CD4-positive, alpha-beta memory T cell (primary cell): ENCODE measurements at regions of chr5 and their contacts with region 1.

Region 1: GRCh38 chr5:82351754-82352145 is 73.6 kb upstream of the RPS23 start:
- DNase-seq: peak in 4 of 5 donors; percentile 46 to 53 (median 50)
- H3K4me3 ChIP-seq: no peak overlapping the region
- H3K4me3 Mint-ChIP-seq: no peak overlapping the region
- H3K27ac ChIP-seq: no peak overlapping the region
- H3K27ac Mint-ChIP-seq: no peak overlapping the region
- H3K4me1 ChIP-seq: peaks cover 11% of the 10 kb centered on the region
- H3K4me1 Mint-ChIP-seq: peaks cover 5 to 12% (median 8%) of the 10 kb centered on the region in 4 donors
- H3K27me3 ChIP-seq: no peaks in the 10 kb centered on the region
- H3K27me3 Mint-ChIP-seq: no peaks in the 10 kb centered on the region

Region 2: GRCh38 chr5:82234883-82235282 is 116.9 kb before region 1 on chr5:
- CTCF ChIA-PET with region 1: no interaction called
- POLR2A ChIA-PET with region 1: no interaction called
- intact Hi-C with region 1: no loop called
- DNase-seq: no peak
- H3K4me3 ChIP-seq: no peak overlapping the region
- H3K4me3 Mint-ChIP-seq: no peak overlapping the region
- H3K27ac ChIP-seq: no peak overlapping the region
- H3K27ac Mint-ChIP-seq: no peak overlapping the region
- H3K4me1 ChIP-seq: no peaks in the 10 kb centered on the region
- H3K4me1 Mint-ChIP-seq: no peaks in the 10 kb centered on the region
- H3K27me3 ChIP-seq: no peaks in the 10 kb centered on the region
- H3K27me3 Mint-ChIP-seq: no peaks in the 10 kb centered on the region

Region 3: GRCh38 chr5:82494942-82495341 is 143.2 kb after region 1 on chr5:
- CTCF ChIA-PET with region 1: interaction called, 5 read pairs
- POLR2A ChIA-PET with region 1: no interaction called
- intact Hi-C with region 1: loop called (anchors 10 kb)
- DNase-seq: no peak
- H3K4me3 ChIP-seq: no peak overlapping the region
- H3K4me3 Mint-ChIP-seq: no peak overlapping the region
- H3K27ac ChIP-seq: no peak overlapping the region
- H3K27ac Mint-ChIP-seq: no peak overlapping the region
- H3K4me1 ChIP-seq: no peaks in the 10 kb centered on the region
- H3K4me1 Mint-ChIP-seq: peaks cover 0 to 6% (median 5%) of the 10 kb centered on the region in 4 donors
- H3K27me3 ChIP-seq: no peaks in the 10 kb centered on the region
- H3K27me3 Mint-ChIP-seq: peaks cover 0 to 5% of the 10 kb centered on the region in 2 donors

Region 4: GRCh38 chr5:82793808-82794419 is 442.2 kb after region 1 on chr5:
- CTCF ChIA-PET with region 1: interaction called, 102 read pairs
- POLR2A ChIA-PET with region 1: no interaction called
- intact Hi-C with region 1: loop called (anchors 1 kb)
- DNase-seq: peak in 4 of 5 donors; percentile 16 to 28 (median 22)
- H3K4me3 ChIP-seq: no peak overlapping the region
- H3K4me3 Mint-ChIP-seq: no peak overlapping the region
- H3K27ac ChIP-seq: no peak overlapping the region
- H3K27ac Mint-ChIP-seq: peak overlapping the region in 1 of 7 donors; percentile 17
- H3K4me1 ChIP-seq: no peaks in the 10 kb centered on the region
- H3K4me1 Mint-ChIP-seq: no peaks in the 10 kb centered on the region
- H3K27me3 ChIP-seq: no peaks in the 10 kb centered on the region
- H3K27me3 Mint-ChIP-seq: peaks cover 2 to 4% of the 10 kb centered on the region in 2 donors

Region 5: GRCh38 chr5:83473346-83474163 is 1121.8 kb after region 1 on chr5:
- CTCF ChIA-PET with region 1: interaction called, 4 read pairs
- POLR2A ChIA-PET with region 1: no interaction called
- intact Hi-C with region 1: loop called (anchors 1 kb)
- DNase-seq: peak in 4 of 5 donors; percentile 36 to 42 (median 37)
- H3K4me3 ChIP-seq: peak overlapping the region; percentile 32 to 57
- H3K4me3 Mint-ChIP-seq: peak overlapping the region; percentile 77 to 93 (median 86)
- H3K27ac ChIP-seq: no peak overlapping the region
- H3K27ac Mint-ChIP-seq: peak overlapping the region in 3 of 7 donors; percentile 43 to 70 (median 54)
- H3K4me1 ChIP-seq: peaks cover 36% of the 10 kb centered on the region
- H3K4me1 Mint-ChIP-seq: peaks cover 20 to 44% (median 33%) of the 10 kb centered on the region in 4 donors
- H3K27me3 ChIP-seq: peaks cover 41% of the 10 kb centered on the region
- H3K27me3 Mint-ChIP-seq: peaks cover 52 to 57% of the 10 kb centered on the region in 2 donors

Region 6: GRCh38 chr5:83718195-83718825 is 1366.6 kb after region 1 on chr5:
- CTCF ChIA-PET with region 1: no interaction called
- POLR2A ChIA-PET with region 1: no interaction called
- intact Hi-C with region 1: loop called (anchors 10 kb)
- DNase-seq: peak in 3 of 5 donors; percentile 16 to 33 (median 20)
- H3K4me3 ChIP-seq: no peak overlapping the region
- H3K4me3 Mint-ChIP-seq: no peak overlapping the region
- H3K27ac ChIP-seq: no peak overlapping the region
- H3K27ac Mint-ChIP-seq: no peak overlapping the region
- H3K4me1 ChIP-seq: no peaks in the 10 kb centered on the region
- H3K4me1 Mint-ChIP-seq: peaks cover 4 to 10% (median 7%) of the 10 kb centered on the region in 4 donors
- H3K27me3 ChIP-seq: peaks cover 7% of the 10 kb centered on the region
- H3K27me3 Mint-ChIP-seq: peaks cover 21 to 37% of the 10 kb centered on the region in 2 donors